ENCODE measurements at regions of chr13 and their contacts with region 1.

Region 1: GRCh38 chr13:94157705-94158218 is 321.7 kb downstream of the DCT start:
- H3K4me3 Mint-ChIP-seq: no peak overlapping the region
- H3K27ac Mint-ChIP-seq: no peak overlapping the region
- H3K4me1 Mint-ChIP-seq: no peaks in the 10 kb centered on the region
- H3K27me3 Mint-ChIP-seq: no peaks in the 10 kb centered on the region

Region 2: GRCh38 chr13:93926425-93926824 is 231.3 kb before region 1 on chr13:
- intact Hi-C with region 1: no loop called
- H3K4me3 Mint-ChIP-seq: no peak overlapping the region
- H3K27ac Mint-ChIP-seq: no peak overlapping the region
- H3K4me1 Mint-ChIP-seq: no peaks in the 10 kb centered on the region
- H3K27me3 Mint-ChIP-seq: no peaks in the 10 kb centered on the region

Region 3: GRCh38 chr13:94362411-94362909 is 204.7 kb after region 1 on chr13:
- intact Hi-C with region 1: loop called (anchors 5 kb)
- H3K4me3 Mint-ChIP-seq: no peak overlapping the region
- H3K27ac Mint-ChIP-seq: no peak overlapping the region
- H3K4me1 Mint-ChIP-seq: no peaks in the 10 kb centered on the region
- H3K27me3 Mint-ChIP-seq: no peaks in the 10 kb centered on the region

Measured in dendritic cell treated with granulocyte-macrophage colony-stimulating factor and Interleukin-4, amounts not matched to agents 40 ng/mL and 50 ng/mL, for 4 days (primary cell).